RWPE1 (cell line): ENCODE measurements at regions of chr15 and their contacts with region 1.

Region 1: DNA sequence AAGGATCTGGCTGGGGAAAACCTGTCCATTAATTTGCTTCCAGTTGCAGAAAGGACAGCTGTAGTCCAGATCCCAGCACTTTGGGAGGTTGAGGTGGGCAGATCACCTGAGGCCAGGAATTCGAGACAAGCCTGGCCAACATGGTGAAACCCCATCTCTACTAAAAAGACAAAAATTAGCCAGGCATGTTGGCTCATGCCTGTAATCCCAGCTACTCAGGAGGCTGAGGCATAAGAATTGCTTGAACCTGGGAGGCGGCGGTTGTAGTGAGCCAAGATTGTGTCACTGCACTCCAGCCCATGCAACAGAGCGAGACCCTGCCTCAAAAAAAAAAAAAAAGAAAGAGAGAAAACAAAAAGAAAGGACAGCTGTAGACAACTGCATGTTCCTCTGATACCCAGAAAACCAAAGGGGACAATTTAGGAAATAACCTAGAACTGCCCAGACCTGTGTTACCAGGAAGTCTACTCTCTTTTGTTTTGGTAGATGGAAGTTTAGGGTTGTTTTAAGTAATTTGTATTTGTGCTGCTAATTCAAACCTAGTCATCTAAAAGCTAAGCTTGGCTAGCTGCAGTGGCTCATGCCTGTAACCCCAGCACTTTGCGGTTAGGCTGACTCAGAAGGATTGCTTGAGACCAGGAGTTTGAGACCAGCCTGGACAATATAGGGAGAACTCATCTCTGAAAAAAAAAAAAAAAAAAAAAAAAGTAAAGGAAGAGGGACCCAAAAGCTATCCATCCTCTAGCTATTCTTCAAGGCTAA is 22.7 kb downstream of the EXD1 start:
- DNase-seq: peak; percentile 62
- H3K27ac ChIP-seq: peak overlapping the region; percentile 86
- CTCF ChIP-seq: no peak

Region 2: DNA sequence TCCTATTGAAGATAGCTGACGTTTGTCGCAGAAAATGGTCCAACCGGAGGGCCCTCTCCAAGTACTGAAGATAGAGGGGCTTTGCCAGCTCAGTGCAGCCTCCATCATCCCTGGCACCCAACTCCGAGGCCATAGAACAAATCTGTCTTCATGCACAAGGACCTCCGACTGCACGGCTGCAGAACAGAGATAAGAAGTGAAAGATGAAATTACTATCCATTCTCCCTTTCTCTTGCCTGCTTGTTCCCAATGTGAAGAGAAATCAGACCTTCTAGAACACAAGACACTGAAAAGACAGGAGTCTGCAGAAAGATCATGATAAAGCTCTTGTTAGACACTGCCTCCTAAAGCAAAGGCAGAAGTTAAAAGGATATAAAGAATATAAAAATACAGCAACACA is 111.7 kb before region 1 on chr15:
- CTCF ChIA-PET with region 1: no interaction called
- POLR2A ChIA-PET with region 1: no interaction called
- DNase-seq: no peak
- H3K27ac ChIP-seq: no peak overlapping the region
- CTCF ChIP-seq: no peak

Region 3: GRCh38 chr15:41194444-41194843 is 13.4 kb before region 1 on chr15:
- CTCF ChIA-PET with region 1: interaction called, 3 read pairs
- POLR2A ChIA-PET with region 1: interaction called, 16 read pairs
- DNase-seq: no peak
- H3K27ac ChIP-seq: no peak overlapping the region
- CTCF ChIP-seq: no peak